ENCODE measurements at regions of chr22 and their contacts with region 1.

Region 1: GRCh38 chr22:41448189-41448808 is 1.7 kb upstream of the TOB2 start:
- DNase-seq: peak; percentile 97 to 98
- ATAC-seq: peak; percentile 68 to 73
- H3K4me3 ChIP-seq: peak overlapping the region; percentile 66 to 99 (median 90)
- H3K27ac ChIP-seq: peak overlapping the region; percentile 92 to 100 (median 99)
- H3K4me1 ChIP-seq: peaks cover 8 to 15% of the 10 kb centered on the region in 2 donors
- H3K27me3 ChIP-seq: no peaks in the 10 kb centered on the region
- CTCF ChIP-seq: no peak
- POLR2A ChIP-seq: peak; percentile 98

Region 2: DNA sequence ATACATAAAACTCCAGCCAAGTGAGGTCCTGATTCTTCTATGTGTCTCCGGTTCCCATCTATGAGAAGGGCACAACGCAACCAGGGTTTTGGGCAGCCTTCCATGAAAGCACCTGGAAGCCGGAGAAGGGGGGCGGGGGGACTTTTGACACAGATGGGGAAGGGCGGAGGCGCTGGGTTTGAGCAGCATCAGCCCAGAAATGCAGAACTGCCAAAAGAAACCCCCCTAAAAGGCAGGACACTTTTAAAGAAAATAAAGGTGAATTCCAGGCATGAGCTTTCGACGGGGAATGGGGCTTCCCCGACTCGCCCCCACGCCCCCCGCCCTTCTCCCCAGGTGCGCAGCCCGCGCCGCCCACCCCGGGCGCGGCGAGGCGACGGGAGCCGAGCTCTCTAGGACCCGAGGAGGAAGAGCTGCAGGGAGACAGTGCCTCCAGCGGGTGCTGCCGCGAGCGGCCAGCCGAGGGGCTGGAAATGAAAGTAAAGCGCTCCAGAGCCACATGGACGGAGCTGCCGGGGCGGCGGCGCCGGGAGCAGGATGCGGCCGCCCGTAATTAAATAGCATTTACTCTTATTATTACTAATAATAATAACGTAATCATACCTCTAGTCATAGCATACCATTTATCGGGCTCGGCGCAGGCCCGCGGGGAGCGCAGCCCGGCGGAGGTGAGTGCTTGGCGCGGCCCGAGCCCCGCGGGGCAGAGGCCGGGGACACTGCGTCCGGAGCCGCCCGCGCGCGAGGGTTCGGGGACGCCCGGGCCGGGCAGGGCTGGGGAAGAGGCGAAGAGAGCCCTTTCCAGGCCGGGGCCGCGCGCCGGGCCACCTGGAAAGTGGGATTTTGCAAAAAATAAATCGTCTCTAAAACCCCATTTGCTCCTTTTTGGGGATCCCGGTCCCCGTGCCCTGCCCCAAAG is 146.9 kb before region 1 on chr22 and contains the start of gene ZC3H7B:
- in situ Hi-C with region 1: no loop called
- intact Hi-C with region 1: loop called (anchors 10 kb)
- DNase-seq: peak; percentile 61 to 79
- ATAC-seq: peak; percentile 94 to 96
- H3K4me3 ChIP-seq: peak within 1 kb of the TSS; percentile 85 to 95 (median 90)
- H3K27ac ChIP-seq: peak within 1 kb of the TSS; percentile 83 to 92 (median 88)
- H3K4me1 ChIP-seq: peaks cover 19 to 27% of the 10 kb centered on the region in 2 donors
- H3K27me3 ChIP-seq: no peaks in the 10 kb centered on the region
- CTCF ChIP-seq: peak in 4 of 5 experiments; percentile 25 to 72 (median 58)
- POLR2A ChIP-seq: peak; percentile 49 to 62
- total RNA-seq, gene ZC3H7B: 17.0 to 22.6 (median 20.5) TPM

Region 3: DNA sequence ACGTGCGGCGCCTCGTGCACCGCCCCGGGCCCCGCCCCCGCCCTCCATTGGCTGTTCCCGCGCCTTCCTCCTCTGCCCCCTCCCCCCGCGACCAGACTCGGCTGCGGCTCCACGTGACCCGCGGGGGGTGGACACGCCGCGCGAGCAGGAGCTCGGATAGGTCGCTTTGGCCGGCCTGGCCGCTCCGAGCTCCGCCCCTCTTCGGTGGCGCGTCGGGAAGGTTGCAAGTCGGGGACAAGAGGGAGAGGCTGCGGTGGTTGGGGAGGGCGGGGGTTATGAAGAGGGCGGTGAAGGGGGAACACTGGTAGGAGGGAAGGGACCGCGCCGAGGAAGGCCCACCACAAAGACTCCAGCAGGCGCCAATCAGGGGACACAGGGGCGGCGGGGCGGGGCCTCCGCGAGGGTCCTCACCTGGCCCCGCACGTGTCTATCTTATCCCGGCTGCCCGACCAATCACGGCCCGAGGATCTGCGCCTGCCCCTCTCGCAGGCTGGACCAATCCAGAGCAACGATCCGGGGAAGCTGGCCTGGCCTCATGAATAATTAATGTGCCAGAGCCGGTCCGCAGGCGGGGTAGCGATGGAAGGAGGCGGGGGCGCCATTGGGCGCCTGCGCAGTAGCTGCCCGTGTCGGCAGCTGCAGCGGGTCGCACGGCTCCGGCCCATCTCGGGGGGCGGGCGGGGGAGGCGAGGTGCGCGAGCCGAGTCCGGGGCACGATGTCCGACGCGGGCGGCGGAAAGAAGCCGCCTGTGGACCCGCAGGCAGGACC is 66.8 kb before region 1 on chr22 and contains the start of gene TEF:
- in situ Hi-C with region 1: no loop called
- intact Hi-C with region 1: loop called (anchors 2 kb)
- DNase-seq: peak; percentile 99 to 100
- ATAC-seq: peak; percentile 75
- H3K4me3 ChIP-seq: peak within 1 kb of the TSS; percentile 73 to 94 (median 86)
- H3K27ac ChIP-seq: peak within 1 kb of the TSS; percentile 96 to 100 (median 100)
- H3K4me1 ChIP-seq: peaks cover 23 to 25% of the 10 kb centered on the region in 2 donors
- H3K27me3 ChIP-seq: no peaks in the 10 kb centered on the region
- CTCF ChIP-seq: no peak
- POLR2A ChIP-seq: peak; percentile 82 to 84
- total RNA-seq, gene TEF: 15.6 to 39.8 (median 19.5) TPM

Region 4: DNA sequence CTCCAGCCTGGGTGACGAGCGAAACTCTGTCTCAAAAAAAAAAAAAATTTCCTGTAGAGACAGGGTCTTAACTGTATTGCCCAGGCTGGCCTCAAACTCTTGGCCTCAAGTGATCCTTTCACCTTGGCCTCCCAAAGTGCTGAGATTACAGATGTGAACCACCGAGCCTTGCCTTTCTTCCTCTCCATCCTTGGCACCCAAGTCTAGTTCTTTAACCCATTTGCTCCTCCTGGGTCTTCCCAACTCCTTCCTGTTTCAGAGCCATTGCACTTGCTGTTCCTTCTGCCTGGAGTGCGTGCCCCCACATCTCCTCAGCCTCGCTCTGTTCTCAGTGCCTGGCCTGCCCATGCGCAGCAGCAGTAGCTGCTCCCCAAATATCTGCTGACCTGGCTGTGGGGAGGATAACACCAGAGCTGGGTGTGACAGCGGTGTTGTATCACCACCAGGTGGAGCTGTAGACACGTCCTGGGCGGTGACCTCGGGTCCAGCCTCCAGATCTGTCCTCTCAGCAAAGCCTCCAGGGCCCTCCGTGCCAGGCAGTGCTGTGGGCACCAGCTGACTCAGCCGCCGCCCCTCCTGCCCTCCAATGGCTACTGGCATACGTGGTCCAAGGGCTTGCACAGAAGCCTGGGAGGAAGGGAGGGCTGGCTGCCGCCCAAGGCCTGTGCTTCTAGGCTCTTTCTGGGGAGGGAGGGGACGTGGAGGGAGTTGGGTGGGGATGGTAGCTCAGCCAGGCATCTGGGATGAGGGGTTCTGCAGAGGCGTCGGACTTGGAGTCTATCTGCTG is 44.6 kb before region 1 on chr22:
- in situ Hi-C with region 1: loop called in 1 of 4 experiments (anchors 5 kb)
- intact Hi-C with region 1: no loop called
- DNase-seq: peak; percentile 96 to 99
- ATAC-seq: peak; percentile 74 to 90
- H3K4me3 ChIP-seq: no peak overlapping the region
- H3K27ac ChIP-seq: peak overlapping the region; percentile 78 to 88 (median 83)
- H3K4me1 ChIP-seq: peaks cover 22 to 26% of the 10 kb centered on the region in 2 donors
- H3K27me3 ChIP-seq: no peaks in the 10 kb centered on the region
- CTCF ChIP-seq: peak; percentile 98 to 99 (median 99)
- POLR2A ChIP-seq: no peak

Region 5: GRCh38 chr22:41468381-41469217 is 20.3 kb after region 1 on chr22 and contains the starts of genes ACO2 and PHF5A:
- in situ Hi-C with region 1: no loop called
- intact Hi-C with region 1: loop called (anchors 1 kb)
- DNase-seq: peak; percentile 95 to 96
- ATAC-seq: peak; percentile 89 to 93
- H3K4me3 ChIP-seq: peak within 1 kb of the TSS; percentile 77 to 94 (median 88)
- H3K27ac ChIP-seq: peak within 1 kb of the TSS; percentile 96 to 98 (median 96)
- H3K4me1 ChIP-seq: peaks cover 44 to 51% of the 10 kb centered on the region in 2 donors
- H3K27me3 ChIP-seq: no peaks in the 10 kb centered on the region
- CTCF ChIP-seq: peak in 2 of 5 experiments; percentile 26 to 45
- POLR2A ChIP-seq: peak; percentile 93 to 95
- total RNA-seq, gene ACO2: 361 to 763 (median 473) TPM
- total RNA-seq, gene PHF5A: 33.8 to 43.5 (median 38.9) TPM

Region 6: DNA sequence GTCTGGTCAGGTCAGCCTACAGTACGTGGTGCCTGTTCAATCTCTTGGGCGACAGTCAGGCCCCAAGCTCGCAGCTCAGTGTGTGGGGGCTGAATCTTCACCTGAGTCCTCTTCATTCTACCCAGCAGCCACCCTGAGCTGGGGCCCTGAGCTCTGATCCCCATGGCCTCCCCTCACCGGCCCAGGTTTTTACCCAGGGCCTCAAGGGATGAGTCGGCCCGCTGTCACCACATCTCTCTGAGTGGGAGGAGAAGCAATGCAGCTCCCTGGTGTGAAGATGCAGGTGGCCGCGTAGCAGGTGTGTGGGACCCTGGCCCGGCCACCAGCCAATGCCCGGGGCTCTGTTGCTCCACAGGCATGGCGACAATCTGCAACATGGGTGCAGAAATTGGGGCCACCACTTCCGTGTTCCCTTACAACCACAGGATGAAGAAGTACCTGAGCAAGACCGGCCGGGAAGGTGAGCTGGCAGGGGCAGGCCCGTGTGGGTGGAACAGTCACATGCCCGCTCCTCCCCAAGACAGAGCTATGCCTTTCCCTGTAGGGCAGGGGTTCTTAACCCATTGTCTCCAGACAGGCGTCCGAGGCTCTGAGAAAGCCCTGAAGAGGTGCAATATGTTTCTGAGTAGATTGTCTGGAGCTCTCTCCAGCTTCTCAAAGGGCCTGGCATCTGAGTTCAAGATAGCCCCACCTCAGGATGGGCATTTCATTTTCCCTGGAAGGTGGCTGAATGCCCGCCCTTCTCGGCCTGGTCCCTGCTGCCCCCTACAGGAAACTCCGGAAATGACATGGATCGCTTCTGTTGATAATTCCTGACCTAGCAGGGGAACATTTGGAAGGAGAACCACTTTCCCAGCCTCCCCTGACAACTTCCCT is 69.1 kb after region 1 on chr22:
- in situ Hi-C with region 1: no loop called
- intact Hi-C with region 1: loop called (anchors 2 kb)
- DNase-seq: peak; percentile 53 to 79
- ATAC-seq: peak; percentile 41 to 56
- H3K4me3 ChIP-seq: no peak overlapping the region
- H3K27ac ChIP-seq: peak overlapping the region; percentile 96 to 98 (median 96)
- H3K4me1 ChIP-seq: peaks cover 41 to 49% of the 10 kb centered on the region in 2 donors
- H3K27me3 ChIP-seq: no peaks in the 10 kb centered on the region
- CTCF ChIP-seq: peak; percentile 91 to 95 (median 94)
- POLR2A ChIP-seq: no peak

Region 7: DNA sequence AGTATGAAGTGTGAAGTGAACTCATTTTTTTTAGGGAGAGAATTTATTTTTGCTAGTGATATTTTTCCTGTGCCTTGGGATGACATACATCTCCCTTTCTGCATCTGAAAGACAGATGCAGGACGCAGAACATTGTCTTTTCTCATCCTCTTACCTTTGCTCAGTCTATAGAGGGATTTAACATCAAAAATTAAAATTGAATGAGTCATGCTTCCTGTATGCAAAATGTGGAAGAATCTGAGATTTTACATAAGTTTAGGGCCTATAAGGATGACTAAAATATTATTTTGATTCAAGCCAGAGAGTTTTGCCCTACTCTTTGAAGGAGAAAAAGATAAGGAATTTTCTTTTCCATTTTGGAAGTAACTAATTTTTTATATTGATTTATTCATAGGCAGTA is 200.1 kb after region 1 on chr22:
- in situ Hi-C with region 1: no loop called
- intact Hi-C with region 1: no loop called
- DNase-seq: no peak
- ATAC-seq: no peak
- H3K4me3 ChIP-seq: no peak overlapping the region
- H3K27ac ChIP-seq: no peak overlapping the region
- H3K4me1 ChIP-seq: no peaks in the 10 kb centered on the region
- H3K27me3 ChIP-seq: no peaks in the 10 kb centered on the region
- CTCF ChIP-seq: no peak
- POLR2A ChIP-seq: no peak

Measured in gastrocnemius medialis (tissue), 4 donors.